Right cardiac atrium (tissue), 5 donors: ENCODE measurements at regions of chr12 and their contacts with region 1.

Region 1: GRCh38 chr12:8681041-8681902 is 16.5 kb upstream of the RIMKLB start:
- DNase-seq: no peak
- ATAC-seq: peak; percentile 65 to 72
- H3K4me3 ChIP-seq: peak overlapping the region; percentile 5
- H3K27ac ChIP-seq: peak overlapping the region; percentile 54
- H3K4me1 ChIP-seq: no peaks in the 10 kb centered on the region
- H3K27me3 ChIP-seq: no peaks in the 10 kb centered on the region

Region 2: GRCh38 chr12:8449293-8449945 is 231.9 kb before region 1 on chr12:
- intact Hi-C with region 1: no loop called
- DNase-seq: no peak
- ATAC-seq: no peak
- H3K4me3 ChIP-seq: no peak overlapping the region
- H3K27ac ChIP-seq: no peak overlapping the region
- H3K4me1 ChIP-seq: no peaks in the 10 kb centered on the region
- H3K27me3 ChIP-seq: no peaks in the 10 kb centered on the region

Region 3: DNA sequence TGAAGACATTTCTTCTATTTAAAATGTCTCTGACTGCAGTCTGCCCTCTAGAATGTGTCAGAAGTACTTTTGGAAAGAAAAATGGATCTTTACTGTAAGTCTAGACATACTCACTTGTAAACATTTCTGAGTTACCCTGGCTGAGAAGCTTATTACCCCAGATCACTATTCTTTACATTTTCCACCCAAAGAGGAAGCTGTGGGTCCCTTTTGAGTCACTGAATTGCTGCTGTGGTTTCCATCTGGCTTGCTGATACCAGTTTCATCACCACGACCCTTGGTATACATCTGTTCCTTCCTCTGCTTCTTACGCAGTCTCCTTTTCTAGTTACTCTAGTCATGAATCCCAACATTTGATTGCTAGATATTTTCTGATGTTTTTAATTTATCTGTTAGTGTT is 188.2 kb before region 1 on chr12:
- intact Hi-C with region 1: no loop called
- DNase-seq: no peak
- ATAC-seq: peak; percentile 29 to 63
- H3K4me3 ChIP-seq: no peak overlapping the region
- H3K27ac ChIP-seq: no peak overlapping the region
- H3K4me1 ChIP-seq: no peaks in the 10 kb centered on the region
- H3K27me3 ChIP-seq: no peaks in the 10 kb centered on the region

Region 4: GRCh38 chr12:8629486-8630033 is 51.7 kb before region 1 on chr12:
- intact Hi-C with region 1: no loop called
- DNase-seq: no peak
- ATAC-seq: no peak
- H3K4me3 ChIP-seq: no peak overlapping the region
- H3K27ac ChIP-seq: no peak overlapping the region
- H3K4me1 ChIP-seq: no peaks in the 10 kb centered on the region
- H3K27me3 ChIP-seq: no peaks in the 10 kb centered on the region

Region 5: DNA sequence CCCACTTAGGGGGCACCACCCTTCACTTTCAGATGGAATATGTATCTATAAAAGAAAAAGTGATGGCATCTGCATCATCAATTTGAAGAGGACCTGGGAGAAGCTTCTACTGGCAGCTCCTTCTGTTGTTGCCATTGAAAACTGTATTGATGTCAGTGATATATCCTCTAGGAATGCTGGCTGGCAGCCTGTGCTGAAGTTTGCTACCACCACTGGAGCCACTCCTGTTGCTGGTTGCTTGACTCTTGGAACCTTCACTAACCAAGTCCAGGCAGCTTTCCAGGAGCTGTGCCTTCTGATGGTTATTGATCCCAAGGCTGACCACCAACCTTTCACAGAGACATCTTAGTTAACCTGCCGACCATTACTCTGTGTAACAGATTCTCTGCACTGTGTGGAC is 61.2 kb after region 1 on chr12:
- intact Hi-C with region 1: no loop called
- DNase-seq: no peak
- ATAC-seq: peak in 1 of 2 donors; percentile 19
- H3K4me3 ChIP-seq: no peak overlapping the region
- H3K27ac ChIP-seq: no peak overlapping the region
- H3K4me1 ChIP-seq: peaks cover 5% of the 10 kb centered on the region
- H3K27me3 ChIP-seq: no peaks in the 10 kb centered on the region

Region 6: DNA sequence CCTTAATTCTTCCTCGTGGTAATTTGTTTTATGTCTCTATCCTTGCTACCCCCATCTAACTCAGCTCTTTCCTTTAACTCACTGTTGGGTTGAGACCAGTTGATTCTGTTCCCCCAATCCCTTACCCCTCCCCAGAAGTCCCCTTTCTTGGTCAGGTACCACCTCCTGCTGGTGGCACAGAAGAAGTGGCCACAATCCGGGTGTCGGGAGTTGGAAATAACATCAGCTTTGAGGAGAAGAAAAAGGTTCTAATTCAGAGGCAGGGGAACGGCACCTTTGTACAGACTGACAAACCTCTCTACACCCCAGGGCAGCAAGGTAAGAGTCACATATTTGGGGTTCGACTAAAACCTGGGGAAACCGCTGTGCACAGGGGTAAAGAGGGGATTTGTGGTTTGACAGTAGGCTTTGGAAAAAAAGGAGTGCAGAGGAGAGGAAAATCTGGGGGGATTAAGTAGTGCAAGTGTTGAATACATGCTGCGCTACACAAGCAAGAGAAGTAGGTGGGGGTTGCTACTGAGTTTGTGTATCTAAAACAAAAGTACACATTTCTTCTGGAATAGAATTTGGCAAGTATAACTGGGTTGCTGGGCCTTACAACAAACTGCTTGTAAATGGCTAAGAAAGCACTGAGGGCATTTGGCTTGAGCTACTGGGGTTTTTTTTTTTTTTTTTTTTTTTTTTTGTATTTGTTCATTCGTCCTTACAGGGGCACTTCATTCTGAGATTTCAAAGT is 142.5 kb after region 1 on chr12:
- intact Hi-C with region 1: loop called in 3 of 4 experiments (anchors 5 to 10 kb)
- DNase-seq: no peak
- ATAC-seq: peak; percentile 61 to 65
- H3K4me3 ChIP-seq: no peak overlapping the region
- H3K27ac ChIP-seq: no peak overlapping the region
- H3K4me1 ChIP-seq: no peaks in the 10 kb centered on the region
- H3K27me3 ChIP-seq: no peaks in the 10 kb centered on the region

Region 7: DNA sequence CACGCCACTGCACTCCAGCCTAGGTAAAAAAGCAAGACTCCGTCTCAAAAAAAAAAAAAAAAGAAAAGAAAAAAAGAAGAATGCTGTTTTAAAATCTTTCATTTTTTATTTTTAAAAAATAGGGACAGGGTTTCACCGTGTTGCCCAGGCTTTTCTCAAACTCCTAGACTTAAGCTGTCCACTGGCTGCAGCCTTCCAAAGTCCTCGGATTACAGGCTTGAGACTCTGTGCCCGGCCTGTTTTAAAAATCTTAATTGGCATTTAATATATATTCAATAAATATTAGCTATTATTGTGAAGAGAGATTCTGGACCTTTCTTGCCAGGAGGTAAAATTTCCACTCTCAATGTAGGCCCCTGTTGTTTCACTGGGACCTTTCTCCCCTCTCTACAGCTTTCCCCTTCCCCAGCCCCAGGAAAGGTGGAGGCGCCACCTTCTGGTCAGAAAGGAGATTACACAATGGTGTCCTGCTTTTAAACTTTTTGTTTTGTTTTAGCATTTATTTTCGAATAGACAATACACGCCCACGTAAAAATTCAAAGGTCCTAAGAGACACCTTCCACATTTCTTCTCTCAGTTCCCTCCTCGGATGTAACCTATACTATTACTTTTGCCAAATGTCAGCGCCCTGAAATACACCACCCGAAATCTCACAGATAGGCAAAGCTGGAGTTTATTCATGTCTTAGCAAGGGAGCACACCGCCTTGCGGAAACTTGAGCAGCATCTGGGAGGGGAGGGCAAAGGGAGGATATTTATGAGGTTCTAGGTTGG is 209.2 kb after region 1 on chr12:
- intact Hi-C with region 1: loop called in 3 of 4 experiments (anchors 2 to 5 kb)
- DNase-seq: peak in 2 of 3 donors; percentile 34 to 62
- ATAC-seq: peak; percentile 71 to 82
- H3K4me3 ChIP-seq: peak overlapping the region; percentile 85
- H3K27ac ChIP-seq: no peak overlapping the region
- H3K4me1 ChIP-seq: no peaks in the 10 kb centered on the region
- H3K27me3 ChIP-seq: no peaks in the 10 kb centered on the region

Region 8: DNA sequence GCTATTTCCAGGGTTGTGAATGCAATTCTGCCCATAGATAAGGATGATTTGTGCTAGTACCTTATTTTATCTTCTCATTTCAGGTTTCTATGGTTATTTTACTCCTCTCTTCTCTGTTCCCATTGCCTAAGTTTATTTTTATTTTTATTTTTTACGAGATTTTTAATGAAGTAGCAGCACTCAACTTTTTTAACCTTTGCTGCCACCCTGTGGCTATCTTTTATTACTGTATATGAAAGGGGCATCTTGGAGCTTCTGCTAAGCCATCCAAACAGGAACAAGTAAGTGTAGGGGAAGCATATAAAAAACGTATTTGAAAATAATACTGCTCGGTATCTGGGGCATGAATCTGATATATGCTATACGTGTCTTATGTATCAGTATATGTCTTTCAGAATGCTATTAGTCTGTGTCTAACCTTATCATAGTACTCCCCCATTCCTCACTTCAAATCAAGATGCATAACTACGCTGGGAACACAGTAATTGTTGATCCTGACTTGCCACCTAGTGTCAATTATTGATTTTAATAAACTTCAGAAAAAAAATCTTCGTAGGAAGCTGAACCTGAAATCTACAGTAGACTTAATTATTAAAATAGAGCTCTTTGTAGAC is 368.4 kb after region 1 on chr12:
- intact Hi-C with region 1: loop called in 2 of 4 experiments (anchors 5 to 10 kb)
- DNase-seq: no peak
- ATAC-seq: no peak
- H3K4me3 ChIP-seq: no peak overlapping the region
- H3K27ac ChIP-seq: no peak overlapping the region
- H3K4me1 ChIP-seq: no peaks in the 10 kb centered on the region
- H3K27me3 ChIP-seq: no peaks in the 10 kb centered on the region